Cardiac septum (tissue), 1 donor: ENCODE measurements at regions of chr2 and their contacts with region 1.

Region 1: DNA sequence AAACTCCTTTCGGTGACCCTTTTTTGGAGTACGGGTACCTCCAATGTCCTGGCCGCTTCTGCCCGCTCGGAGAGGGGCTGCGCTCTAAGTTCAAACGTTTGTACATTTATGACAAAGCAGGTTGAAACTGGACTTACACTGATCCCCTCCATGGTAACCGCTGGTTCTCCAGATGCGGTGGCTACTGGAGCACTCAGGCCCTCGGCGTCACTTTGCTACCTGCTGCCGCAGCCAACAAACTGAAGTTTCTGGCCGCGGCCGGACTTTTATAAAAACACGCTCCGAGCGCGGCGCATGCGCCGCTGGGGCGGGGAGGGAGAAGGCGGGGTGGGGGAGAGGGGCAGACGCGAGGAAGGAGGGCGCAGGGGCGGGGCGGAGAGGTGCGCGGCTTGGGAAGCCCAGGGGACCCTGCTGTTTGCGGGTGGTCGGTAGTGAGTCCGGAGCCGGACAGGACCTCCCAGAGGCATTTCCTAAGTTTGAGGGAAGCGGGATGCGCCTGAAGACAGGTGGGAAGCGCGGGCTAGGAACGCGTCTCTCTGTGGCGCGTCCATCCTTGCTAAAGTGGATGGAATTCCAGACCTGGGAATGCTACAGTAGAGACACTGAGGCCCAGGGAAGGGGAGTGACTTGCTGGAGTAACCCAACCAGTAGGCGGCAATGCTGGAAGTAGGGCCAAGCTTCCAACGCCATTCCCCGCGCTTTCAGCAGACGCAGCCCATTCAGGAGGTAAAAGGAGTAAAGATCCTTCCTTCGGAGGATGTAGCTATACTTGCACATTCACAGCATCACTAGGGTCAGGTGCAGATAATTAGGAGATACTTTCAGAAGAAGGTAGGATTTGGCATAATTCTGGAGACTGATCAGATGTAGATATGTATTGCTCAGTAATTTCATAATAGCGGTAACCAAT is at the start of gene CXCR4:
- DNase-seq: peak; percentile 93
- total RNA-seq, gene CXCR4: 4.4 TPM

Region 2: DNA sequence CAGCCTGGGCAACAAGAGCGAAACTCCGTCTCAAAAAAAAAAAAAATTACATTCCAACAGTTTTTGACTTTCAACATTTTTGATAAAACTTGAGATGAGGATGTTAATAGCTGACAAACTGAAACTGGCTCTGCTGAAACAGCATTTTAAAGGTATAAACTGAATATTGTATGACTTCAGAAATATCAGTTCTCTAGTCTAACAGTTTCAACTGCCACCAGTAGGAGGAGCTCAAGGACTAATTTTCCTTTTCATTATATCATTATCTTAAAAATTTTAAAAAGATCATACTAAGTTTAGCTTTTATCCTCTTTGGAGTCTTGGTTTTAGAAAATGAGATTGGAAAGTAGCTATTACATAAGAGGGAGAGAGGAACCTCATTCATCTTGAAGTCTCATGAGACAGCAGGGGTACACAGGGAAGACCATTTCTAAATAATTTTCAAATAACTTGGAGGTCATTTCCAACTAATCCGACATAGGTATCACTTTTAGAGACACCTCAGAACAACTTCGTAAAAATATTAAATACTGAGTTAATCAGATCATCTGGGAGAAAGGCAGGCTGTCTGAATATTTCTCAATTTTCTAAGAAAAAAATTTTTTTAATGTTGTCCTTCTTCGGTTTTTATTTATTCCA is 204.3 kb before region 1 on chr2:
- intact Hi-C with region 1: loop called (anchors 10 kb)
- DNase-seq: no peak